ENCODE measurements at regions of chr15 and their contacts with region 1.

Region 1: GRCh38 chr15:67433495-67434099 is 87.3 kb upstream of the C15orf61 start:
- DNase-seq: peak; percentile 67
- H3K4me3 ChIP-seq: no peak overlapping the region
- H3K27ac ChIP-seq: no peak overlapping the region
- H3K4me1 ChIP-seq: no peaks in the 10 kb centered on the region
- H3K27me3 ChIP-seq: no peaks in the 10 kb centered on the region
- CTCF ChIP-seq: peak; percentile 83

Region 2: DNA sequence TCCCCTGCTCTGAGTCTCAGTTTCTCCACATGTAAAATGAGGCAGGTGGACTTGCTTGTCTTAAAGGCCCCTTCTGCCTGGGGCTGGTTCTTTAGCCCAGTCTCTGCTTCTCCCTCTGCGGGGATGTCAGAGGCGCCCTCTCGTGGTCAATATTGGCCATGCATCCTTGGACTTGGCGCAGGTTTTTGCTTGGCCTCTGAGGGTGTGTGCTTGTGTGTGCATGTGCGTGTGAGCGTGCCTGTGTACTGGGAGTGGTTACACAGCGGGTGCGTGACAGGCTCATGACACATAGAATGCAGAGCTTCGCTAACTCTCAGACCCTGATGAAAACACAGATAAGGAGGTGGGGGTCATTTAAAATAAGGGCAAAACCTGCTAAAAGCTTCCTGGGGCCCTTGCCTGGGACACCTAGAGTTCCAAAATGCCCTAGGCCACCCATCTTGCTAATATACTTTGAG is 570.7 kb before region 1 on chr15:
- CTCF ChIA-PET with region 1: interaction called, 13 read pairs
- POLR2A ChIA-PET with region 1: no interaction called
- intact Hi-C with region 1: no loop called
- DNase-seq: peak; percentile 89
- H3K4me3 ChIP-seq: no peak overlapping the region
- H3K27ac ChIP-seq: no peak overlapping the region
- H3K4me1 ChIP-seq: no peaks in the 10 kb centered on the region
- H3K27me3 ChIP-seq: no peaks in the 10 kb centered on the region
- CTCF ChIP-seq: peak; percentile 95

Region 3: DNA sequence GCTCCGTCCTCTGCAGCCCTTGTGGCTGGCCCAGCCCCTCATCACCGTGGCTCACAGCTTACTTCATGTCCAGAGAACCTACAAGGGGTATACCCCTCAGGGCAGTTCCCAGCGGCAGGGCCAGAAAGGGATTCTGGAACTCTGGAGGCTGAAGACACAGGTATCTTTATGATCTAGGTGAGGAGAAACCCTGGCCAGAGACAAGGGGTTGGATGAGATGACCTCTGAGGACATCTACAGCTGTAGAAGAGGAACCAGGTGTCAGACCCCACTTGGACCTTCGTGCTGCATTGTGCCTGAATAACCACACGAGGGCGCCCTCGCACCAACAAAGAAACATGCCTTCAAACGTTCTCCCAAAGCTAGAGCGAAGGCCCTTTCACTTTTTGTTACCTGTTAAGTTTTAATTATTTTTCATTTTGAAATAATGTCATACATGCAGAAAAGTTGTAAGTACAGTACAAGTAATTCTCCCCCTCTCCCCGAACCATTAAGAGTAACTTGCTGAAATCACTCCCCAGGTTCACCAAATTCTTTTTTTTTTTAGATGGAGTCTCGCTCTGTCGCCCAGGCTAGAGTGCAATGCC is 486.9 kb before region 1 on chr15:
- CTCF ChIA-PET with region 1: interaction called, 10 read pairs
- POLR2A ChIA-PET with region 1: no interaction called
- intact Hi-C with region 1: loop called (anchors 1 kb)
- DNase-seq: peak; percentile 74
- H3K4me3 ChIP-seq: peak overlapping the region; percentile 20
- H3K27ac ChIP-seq: no peak overlapping the region
- H3K4me1 ChIP-seq: no peaks in the 10 kb centered on the region
- H3K27me3 ChIP-seq: no peaks in the 10 kb centered on the region
- CTCF ChIP-seq: peak; percentile 92

Region 4: GRCh38 chr15:67396114-67396513 is 37.5 kb before region 1 on chr15:
- CTCF ChIA-PET with region 1: interaction called, 15 read pairs
- POLR2A ChIA-PET with region 1: no interaction called
- intact Hi-C with region 1: no loop called
- DNase-seq: no peak
- H3K4me3 ChIP-seq: no peak overlapping the region
- H3K27ac ChIP-seq: no peak overlapping the region
- H3K4me1 ChIP-seq: no peaks in the 10 kb centered on the region
- H3K27me3 ChIP-seq: no peaks in the 10 kb centered on the region
- CTCF ChIP-seq: no peak